Activated naive CD4-positive, alpha-beta T cell treated with anti-CD3 and anti-CD28 coated beads for 36 hours (primary cell): ENCODE measurements at regions of chr6 and their contacts with region 1.

Region 1: DNA sequence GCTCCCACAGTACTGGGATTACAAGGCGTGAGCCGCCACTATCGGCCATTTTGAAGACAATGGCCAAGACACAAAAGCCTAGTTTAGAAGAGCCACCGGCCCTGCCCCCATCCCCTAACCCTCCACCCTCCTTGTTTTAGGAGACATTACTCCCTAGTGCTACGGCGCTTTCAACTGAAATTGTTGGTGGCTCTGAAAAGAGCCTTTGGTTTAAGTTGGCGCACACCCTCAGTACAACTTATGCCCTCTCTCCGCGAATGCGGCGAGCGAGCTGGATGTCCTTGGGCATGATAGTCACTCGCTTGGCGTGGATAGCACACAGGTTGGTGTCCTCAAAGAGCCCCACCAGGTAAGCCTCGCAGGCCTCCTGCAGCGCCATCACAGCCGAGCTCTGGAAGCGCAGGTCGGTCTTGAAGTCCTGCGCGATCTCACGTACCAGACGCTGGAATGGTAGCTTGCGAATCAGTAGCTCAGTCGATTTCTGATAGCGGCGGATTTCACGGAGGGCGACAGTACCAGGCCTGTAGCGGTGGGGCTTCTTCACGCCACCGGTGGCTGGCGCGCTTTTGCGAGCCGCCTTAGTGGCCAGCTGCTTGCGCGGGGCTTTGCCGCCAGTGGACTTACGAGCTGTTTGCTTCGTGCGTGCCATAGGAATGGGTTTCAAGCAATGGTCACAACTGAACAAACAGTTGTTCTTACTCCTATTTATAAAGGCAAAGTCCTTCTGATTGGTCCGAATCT is 114.9 kb upstream of the BTN3A2 start:
- DNase-seq: peak; percentile 82
- H3K4me3 Mint-ChIP-seq: peak overlapping the region; percentile 86
- H3K27ac Mint-ChIP-seq: peak overlapping the region; percentile 100
- H3K4me1 Mint-ChIP-seq: peaks cover 17% of the 10 kb centered on the region
- H3K27me3 Mint-ChIP-seq: no peaks in the 10 kb centered on the region

Region 2: DNA sequence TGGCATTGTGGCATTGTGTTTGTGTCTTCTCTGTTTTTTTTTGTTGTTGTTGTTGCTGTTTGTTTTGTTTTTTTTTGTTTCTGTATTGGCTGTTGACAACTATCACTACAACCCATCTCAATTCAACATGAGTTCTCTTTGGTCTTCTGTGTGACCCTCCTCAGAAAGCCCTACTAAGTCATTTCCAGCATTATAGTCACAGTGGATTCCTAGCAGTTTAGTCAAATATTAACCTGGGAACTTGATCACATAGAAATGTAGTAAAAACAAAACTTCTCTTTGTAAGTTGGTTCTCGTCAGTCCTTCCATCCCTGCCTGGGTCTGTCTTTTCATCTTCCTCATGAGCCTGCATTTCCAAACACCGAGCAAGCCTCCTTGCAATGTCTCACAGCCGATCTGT is 336.4 kb before region 1 on chr6:
- CTCF ChIA-PET with region 1: no interaction called
- intact Hi-C with region 1: no loop called
- DNase-seq: peak; percentile 35
- H3K4me3 Mint-ChIP-seq: no peak overlapping the region
- H3K27ac Mint-ChIP-seq: peak overlapping the region; percentile 85
- H3K4me1 Mint-ChIP-seq: peaks cover 46% of the 10 kb centered on the region
- H3K27me3 Mint-ChIP-seq: peaks cover 2% of the 10 kb centered on the region

Region 3: DNA sequence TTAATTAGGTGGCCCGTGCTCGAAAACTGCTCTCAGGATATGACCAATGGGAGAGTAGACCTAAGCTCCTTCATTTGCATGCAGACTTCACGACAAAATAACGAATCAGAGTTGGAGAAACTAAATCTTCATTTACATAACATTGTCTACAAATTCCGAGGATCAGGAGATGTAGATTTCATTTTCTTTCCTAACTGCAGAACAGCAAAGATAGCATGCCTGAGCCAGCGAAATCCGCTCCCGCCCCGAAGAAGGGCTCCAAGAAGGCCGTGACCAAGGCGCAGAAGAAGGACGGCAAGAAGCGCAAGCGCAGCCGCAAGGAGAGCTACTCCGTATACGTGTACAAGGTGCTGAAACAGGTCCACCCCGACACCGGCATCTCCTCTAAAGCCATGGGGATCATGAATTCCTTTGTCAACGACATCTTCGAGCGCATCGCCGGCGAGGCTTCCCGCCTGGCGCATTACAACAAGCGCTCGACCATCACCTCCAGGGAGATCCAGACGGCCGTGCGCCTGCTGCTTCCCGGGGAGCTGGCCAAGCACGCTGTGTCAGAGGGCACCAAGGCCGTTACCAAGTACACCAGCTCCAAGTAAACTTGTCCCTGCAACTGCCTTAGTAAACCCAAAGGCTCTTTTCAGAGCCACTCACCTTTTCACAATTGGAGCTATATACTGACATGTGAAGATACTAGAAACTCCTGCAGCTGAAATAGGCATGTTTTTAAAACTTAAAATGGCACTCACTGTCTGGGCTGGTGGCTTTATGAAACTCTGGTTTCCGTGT is 66.4 kb before region 1 on chr6:
- CTCF ChIA-PET with region 1: interaction called, 8 read pairs
- intact Hi-C with region 1: loop called (anchors 2 kb)
- DNase-seq: peak; percentile 73
- H3K4me3 Mint-ChIP-seq: peak overlapping the region; percentile 86
- H3K27ac Mint-ChIP-seq: peak overlapping the region; percentile 89
- H3K4me1 Mint-ChIP-seq: peaks cover 30% of the 10 kb centered on the region
- H3K27me3 Mint-ChIP-seq: no peaks in the 10 kb centered on the region

Region 4: DNA sequence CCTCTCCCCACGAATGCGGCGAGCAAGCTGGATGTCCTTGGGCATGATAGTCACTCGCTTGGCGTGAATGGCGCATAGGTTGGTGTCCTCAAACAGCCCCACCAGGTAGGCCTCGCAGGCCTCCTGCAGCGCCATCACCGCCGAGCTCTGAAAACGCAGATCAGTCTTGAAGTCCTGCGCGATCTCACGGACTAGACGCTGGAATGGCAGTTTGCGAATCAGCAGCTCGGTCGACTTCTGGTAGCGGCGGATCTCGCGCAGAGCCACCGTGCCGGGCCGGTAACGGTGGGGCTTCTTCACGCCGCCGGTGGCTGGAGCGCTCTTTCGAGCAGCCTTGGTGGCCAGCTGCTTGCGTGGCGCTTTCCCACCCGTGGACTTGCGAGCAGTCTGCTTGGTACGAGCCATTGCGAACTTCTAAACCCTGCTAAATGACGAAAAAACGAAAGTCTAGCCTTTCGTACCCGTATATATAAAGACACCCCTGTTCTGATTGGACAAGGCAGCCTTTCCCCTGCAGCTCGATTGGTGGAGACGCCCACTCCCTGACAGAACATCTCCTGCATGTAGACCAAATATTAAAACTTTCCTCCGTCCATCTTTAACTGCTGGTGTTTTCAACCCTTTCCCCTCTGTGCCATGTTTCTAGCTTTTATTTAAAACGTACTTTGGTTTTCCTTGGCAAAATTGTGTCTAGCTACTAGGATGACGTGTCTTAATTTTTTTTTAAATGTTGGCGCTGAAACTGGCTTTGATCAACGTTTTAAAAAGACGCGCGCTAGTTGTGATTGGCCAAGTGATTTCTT is 53.1 kb before region 1 on chr6:
- CTCF ChIA-PET with region 1: interaction called, 10 read pairs
- intact Hi-C with region 1: loop called (anchors 1 kb)
- DNase-seq: peak; percentile 86
- H3K4me3 Mint-ChIP-seq: peak overlapping the region; percentile 96
- H3K27ac Mint-ChIP-seq: peak overlapping the region; percentile 99
- H3K4me1 Mint-ChIP-seq: peaks cover 36% of the 10 kb centered on the region
- H3K27me3 Mint-ChIP-seq: peaks cover 5% of the 10 kb centered on the region

Region 5: DNA sequence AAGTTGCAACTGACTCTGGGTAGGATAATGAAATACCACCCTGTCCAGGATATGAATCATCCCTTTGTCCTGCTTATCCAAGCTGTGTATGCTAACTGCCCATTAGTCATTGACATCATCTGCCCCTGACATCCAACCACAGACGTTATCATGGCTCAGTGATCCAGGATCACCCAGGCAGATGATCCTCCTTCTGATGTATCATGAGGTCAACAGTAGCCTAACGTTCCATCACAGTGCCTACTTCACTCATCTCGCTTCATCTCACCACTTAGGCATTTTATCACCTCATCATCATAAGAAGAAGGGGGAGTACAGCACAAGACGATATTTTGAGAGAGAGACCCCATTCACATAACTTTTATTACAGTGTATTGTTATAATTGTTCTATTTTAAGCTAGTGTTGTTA is 101.4 kb after region 1 on chr6:
- CTCF ChIA-PET with region 1: no interaction called
- intact Hi-C with region 1: no loop called
- DNase-seq: no peak
- H3K4me3 Mint-ChIP-seq: no peak overlapping the region
- H3K27ac Mint-ChIP-seq: no peak overlapping the region
- H3K4me1 Mint-ChIP-seq: no peaks in the 10 kb centered on the region
- H3K27me3 Mint-ChIP-seq: no peaks in the 10 kb centered on the region